T-cell (primary cell): ENCODE measurements at regions of chr10 and their contacts with region 1.

Region 1: DNA sequence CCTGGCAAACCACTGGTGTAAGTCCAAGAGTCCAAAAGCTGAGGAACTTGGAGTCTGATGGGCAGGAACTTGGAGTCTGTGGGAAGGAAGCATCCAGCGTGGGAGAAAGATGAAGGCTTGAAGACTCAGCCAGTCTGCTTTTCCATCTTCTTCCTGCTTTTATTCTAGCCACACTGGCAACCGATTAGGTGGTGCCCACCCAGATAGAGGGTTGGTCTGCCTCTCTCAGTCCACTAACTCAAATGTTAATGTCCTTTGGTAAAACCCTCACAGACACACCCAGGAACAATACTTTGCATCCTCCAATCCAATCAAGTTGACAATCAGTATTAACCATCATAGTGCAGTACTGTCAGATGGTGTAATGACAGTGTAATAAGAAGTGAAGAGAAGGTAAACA is 119.2 kb downstream of the EPC1 start:
- DNase-seq: no peak
- ATAC-seq: no peak
- H3K4me3 ChIP-seq: no peak overlapping the region
- H3K4me3 Mint-ChIP-seq: no peak overlapping the region
- H3K27ac ChIP-seq: no peak overlapping the region
- H3K27ac Mint-ChIP-seq: no peak overlapping the region
- H3K4me1 ChIP-seq: no peaks in the 10 kb centered on the region
- H3K4me1 Mint-ChIP-seq: no peaks in the 10 kb centered on the region
- H3K27me3 ChIP-seq: peaks cover 0 to 4% of the 10 kb centered on the region in 2 experiments
- H3K27me3 Mint-ChIP-seq: peaks cover 0 to 2% of the 10 kb centered on the region in 2 donors

Region 2: DNA sequence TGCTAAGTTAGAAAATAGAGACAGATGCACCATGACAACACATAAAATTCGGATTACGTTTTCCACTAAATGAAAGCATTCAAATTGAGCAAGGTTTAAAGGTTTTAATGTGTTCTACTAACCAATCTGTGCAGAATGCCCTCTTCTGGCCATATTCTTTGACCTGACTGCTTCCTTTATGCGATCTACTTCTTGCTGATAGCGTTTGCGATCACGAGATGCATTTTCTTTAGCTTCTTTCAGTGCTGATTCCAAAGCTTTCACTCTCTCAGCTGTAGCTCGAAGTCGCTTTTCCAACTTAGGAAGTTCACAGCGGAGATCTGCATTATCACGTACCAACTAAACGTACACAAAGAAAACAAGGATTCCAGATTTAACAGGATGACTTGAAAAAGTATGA is 210.8 kb before region 1 on chr10:
- CTCF ChIA-PET with region 1: no interaction called
- POLR2A ChIA-PET with region 1: no interaction called
- DNase-seq: no peak
- ATAC-seq: no peak
- H3K4me3 ChIP-seq: no peak overlapping the region
- H3K4me3 Mint-ChIP-seq: no peak overlapping the region
- H3K27ac ChIP-seq: no peak overlapping the region
- H3K27ac Mint-ChIP-seq: no peak overlapping the region
- H3K4me1 ChIP-seq: no peaks in the 10 kb centered on the region
- H3K4me1 Mint-ChIP-seq: peaks cover 0 to 6% (median 2%) of the 10 kb centered on the region in 3 donors
- H3K27me3 ChIP-seq: no peaks in the 10 kb centered on the region
- H3K27me3 Mint-ChIP-seq: no peaks in the 10 kb centered on the region

Region 3: DNA sequence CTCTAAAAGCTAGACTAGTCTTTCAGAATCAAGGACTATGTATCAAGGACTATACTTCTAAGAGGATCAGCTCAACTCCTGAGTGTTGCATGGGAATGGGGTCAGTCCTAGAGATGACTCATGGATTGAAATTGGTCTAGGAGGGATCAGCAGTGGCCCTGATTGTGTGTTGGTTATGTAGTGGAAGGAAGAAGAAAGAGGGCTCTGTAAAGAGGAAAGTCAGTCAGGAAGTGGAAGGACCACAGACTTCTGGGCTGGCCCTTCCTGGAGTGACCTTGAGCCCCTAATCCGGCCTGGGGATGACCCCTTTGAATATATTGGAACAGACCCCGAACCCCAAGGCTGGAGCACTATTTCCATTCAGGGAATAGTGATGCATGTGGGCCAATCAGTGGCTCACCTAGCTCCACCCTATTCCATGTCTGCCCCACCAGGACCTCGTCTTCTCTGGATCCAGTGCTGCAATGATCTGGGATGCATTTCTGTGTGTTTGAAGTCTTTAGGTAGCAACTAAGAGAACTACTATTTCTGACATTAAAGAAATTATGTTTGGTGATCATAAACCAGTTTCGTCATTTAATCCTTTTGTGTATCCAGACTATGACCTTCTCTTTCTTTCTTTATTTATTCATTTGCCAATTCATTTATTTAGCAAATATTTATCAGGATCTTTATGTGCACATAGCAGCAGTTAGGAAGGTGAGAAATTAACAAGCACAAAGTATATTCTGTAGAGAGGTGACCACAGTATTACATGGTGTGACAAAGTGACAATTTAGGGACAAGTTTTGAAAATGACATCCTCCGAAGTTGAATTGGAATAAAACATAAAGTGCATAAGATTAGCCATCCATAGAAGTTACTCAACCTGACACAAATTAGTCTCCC is 122.9 kb before region 1 on chr10:
- CTCF ChIA-PET with region 1: no interaction called
- POLR2A ChIA-PET with region 1: no interaction called
- DNase-seq: no peak
- ATAC-seq: no peak
- H3K4me3 ChIP-seq: no peak overlapping the region
- H3K4me3 Mint-ChIP-seq: no peak overlapping the region
- H3K27ac ChIP-seq: no peak overlapping the region
- H3K27ac Mint-ChIP-seq: no peak overlapping the region
- H3K4me1 ChIP-seq: no peaks in the 10 kb centered on the region
- H3K4me1 Mint-ChIP-seq: no peaks in the 10 kb centered on the region
- H3K27me3 ChIP-seq: peaks cover 0 to 3% of the 10 kb centered on the region in 2 experiments
- H3K27me3 Mint-ChIP-seq: peaks cover 0 to 7% of the 10 kb centered on the region in 2 donors

Region 4: GRCh38 chr10:32199724-32200394 is 27.9 kb before region 1 on chr10:
- CTCF ChIA-PET with region 1: no interaction called
- POLR2A ChIA-PET with region 1: no interaction called
- DNase-seq: peak in 1 of 35 experiments; percentile 14
- ATAC-seq: no peak
- H3K4me3 ChIP-seq: no peak overlapping the region
- H3K4me3 Mint-ChIP-seq: no peak overlapping the region
- H3K27ac ChIP-seq: no peak overlapping the region
- H3K27ac Mint-ChIP-seq: no peak overlapping the region
- H3K4me1 ChIP-seq: no peaks in the 10 kb centered on the region
- H3K4me1 Mint-ChIP-seq: no peaks in the 10 kb centered on the region
- H3K27me3 ChIP-seq: no peaks in the 10 kb centered on the region
- H3K27me3 Mint-ChIP-seq: no peaks in the 10 kb centered on the region

Region 5: GRCh38 chr10:32217216-32217615 is 10.6 kb before region 1 on chr10:
- CTCF ChIA-PET with region 1: interaction called in 1 of 2 experiments, 10 read pairs
- POLR2A ChIA-PET with region 1: no interaction called
- DNase-seq: no peak
- ATAC-seq: no peak
- H3K4me3 ChIP-seq: no peak overlapping the region
- H3K4me3 Mint-ChIP-seq: no peak overlapping the region
- H3K27ac ChIP-seq: no peak overlapping the region
- H3K27ac Mint-ChIP-seq: no peak overlapping the region
- H3K4me1 ChIP-seq: no peaks in the 10 kb centered on the region
- H3K4me1 Mint-ChIP-seq: no peaks in the 10 kb centered on the region
- H3K27me3 ChIP-seq: peaks cover 0 to 5% of the 10 kb centered on the region in 2 experiments
- H3K27me3 Mint-ChIP-seq: peaks cover 4 to 10% of the 10 kb centered on the region in 2 donors

Region 6: GRCh38 chr10:32263300-32263699 is 35.5 kb after region 1 on chr10:
- CTCF ChIA-PET with region 1: no interaction called
- POLR2A ChIA-PET with region 1: no interaction called
- DNase-seq: no peak
- ATAC-seq: peak; percentile 33 to 40 (median 37)
- H3K4me3 ChIP-seq: no peak overlapping the region
- H3K4me3 Mint-ChIP-seq: no peak overlapping the region
- H3K27ac ChIP-seq: no peak overlapping the region
- H3K27ac Mint-ChIP-seq: no peak overlapping the region
- H3K4me1 ChIP-seq: no peaks in the 10 kb centered on the region
- H3K4me1 Mint-ChIP-seq: peaks cover 0 to 4% (median 3%) of the 10 kb centered on the region in 3 donors
- H3K27me3 ChIP-seq: no peaks in the 10 kb centered on the region
- H3K27me3 Mint-ChIP-seq: no peaks in the 10 kb centered on the region